Endothelial cell of umbilical vein (primary cell): ENCODE measurements at regions of chr16 and their contacts with region 1.

Region 1: GRCh38 chr16:72664509-72665225 is 383.3 kb downstream of the ZFHX3 start:
- DNase-seq: peak; percentile 98
- H3K4me3 ChIP-seq: peak overlapping the region; percentile 89 to 96 (median 95)
- H3K27ac ChIP-seq: peak overlapping the region; percentile 88
- H3K4me1 ChIP-seq: peaks cover 10% of the 10 kb centered on the region
- H3K27me3 ChIP-seq: no peaks in the 10 kb centered on the region
- CTCF ChIP-seq: no peak
- POLR2A ChIP-seq: peak; percentile 59

Region 2: GRCh38 chr16:72380283-72380682 is 284.4 kb before region 1 on chr16:
- CTCF ChIA-PET with region 1: no interaction called
- POLR2A ChIA-PET with region 1: no interaction called
- dilution Hi-C with region 1: no loop called
- intact Hi-C with region 1: loop called (anchors 10 kb)
- DNase-seq: peak; percentile 25
- H3K4me3 ChIP-seq: no peak overlapping the region
- H3K27ac ChIP-seq: peak overlapping the region; percentile 7
- H3K4me1 ChIP-seq: no peaks in the 10 kb centered on the region
- H3K27me3 ChIP-seq: no peaks in the 10 kb centered on the region
- CTCF ChIP-seq: no peak
- POLR2A ChIP-seq: no peak

Region 3: DNA sequence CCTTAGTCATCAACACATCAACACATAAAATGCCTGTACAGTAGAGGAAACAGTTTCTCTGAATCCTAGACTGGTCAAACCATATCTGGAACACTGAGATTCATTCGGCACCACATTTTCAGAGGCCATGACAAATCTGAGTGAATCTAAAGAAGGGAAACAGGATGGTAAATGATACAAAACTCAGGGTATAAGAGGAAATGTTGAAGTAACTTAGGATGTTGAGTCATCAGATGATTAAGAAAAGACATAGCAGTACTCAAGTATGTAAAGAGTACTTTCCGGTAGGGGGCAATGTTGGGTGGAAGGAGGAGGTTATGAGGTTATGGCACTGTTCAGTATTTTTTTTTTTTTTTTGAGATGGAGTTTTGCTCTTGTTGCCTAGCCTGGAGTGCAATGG is 134.2 kb before region 1 on chr16:
- CTCF ChIA-PET with region 1: no interaction called
- POLR2A ChIA-PET with region 1: no interaction called
- dilution Hi-C with region 1: no loop called
- intact Hi-C with region 1: loop called (anchors 1 kb)
- DNase-seq: peak; percentile 82
- H3K4me3 ChIP-seq: no peak overlapping the region
- H3K27ac ChIP-seq: peak overlapping the region; percentile 68
- H3K4me1 ChIP-seq: peaks cover 11% of the 10 kb centered on the region
- H3K27me3 ChIP-seq: no peaks in the 10 kb centered on the region
- CTCF ChIP-seq: peak; percentile 35 to 46
- POLR2A ChIP-seq: no peak

Region 4: GRCh38 chr16:72787514-72788268 is 123.0 kb after region 1 on chr16:
- CTCF ChIA-PET with region 1: no interaction called
- POLR2A ChIA-PET with region 1: no interaction called
- dilution Hi-C with region 1: no loop called
- intact Hi-C with region 1: loop called (anchors 2 kb)
- DNase-seq: peak; percentile 86
- H3K4me3 ChIP-seq: peak overlapping the region; percentile 27 to 57 (median 55)
- H3K27ac ChIP-seq: peak overlapping the region; percentile 95
- H3K4me1 ChIP-seq: peaks cover 7% of the 10 kb centered on the region
- H3K27me3 ChIP-seq: no peaks in the 10 kb centered on the region
- CTCF ChIP-seq: no peak
- POLR2A ChIP-seq: no peak

Region 5: DNA sequence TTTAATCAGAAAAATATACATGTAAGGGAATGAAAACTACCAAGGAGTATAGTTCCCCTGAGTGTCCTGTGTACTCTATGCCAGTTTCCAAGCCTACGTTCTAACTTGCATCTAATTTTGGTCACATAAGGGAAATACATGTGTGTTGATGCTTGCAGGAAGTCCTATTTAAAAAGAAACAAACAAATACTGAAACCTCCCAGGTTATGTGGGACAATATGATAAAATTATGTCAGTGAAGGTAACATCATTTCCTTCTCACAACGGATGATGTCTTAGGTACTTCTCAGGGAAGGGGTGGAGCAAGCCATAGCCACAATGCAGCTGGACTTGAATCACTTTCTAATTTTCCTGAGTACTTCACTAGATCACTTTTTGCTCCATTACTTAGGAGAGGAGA is 267.4 kb after region 1 on chr16:
- CTCF ChIA-PET with region 1: no interaction called
- POLR2A ChIA-PET with region 1: no interaction called
- dilution Hi-C with region 1: no loop called
- intact Hi-C with region 1: loop called (anchors 5 kb)
- DNase-seq: no peak
- H3K4me3 ChIP-seq: no peak overlapping the region
- H3K27ac ChIP-seq: no peak overlapping the region
- H3K4me1 ChIP-seq: peaks cover 14% of the 10 kb centered on the region
- H3K27me3 ChIP-seq: no peaks in the 10 kb centered on the region
- CTCF ChIP-seq: no peak
- POLR2A ChIP-seq: no peak

Region 6: GRCh38 chr16:73196670-73197069 is 532.0 kb after region 1 on chr16:
- CTCF ChIA-PET with region 1: interaction called, 3 read pairs
- POLR2A ChIA-PET with region 1: no interaction called
- dilution Hi-C with region 1: no loop called
- intact Hi-C with region 1: loop called (anchors 1 kb)
- DNase-seq: peak; percentile 78
- H3K4me3 ChIP-seq: no peak overlapping the region
- H3K27ac ChIP-seq: no peak overlapping the region
- H3K4me1 ChIP-seq: no peaks in the 10 kb centered on the region
- H3K27me3 ChIP-seq: peaks cover 5 to 10% of the 10 kb centered on the region in 2 experiments
- CTCF ChIP-seq: peak; percentile 56 to 60
- POLR2A ChIP-seq: no peak